ENCODE measurements at regions of chr5 and their contacts with region 1.

Region 1: GRCh38 chr5:75551471-75551870 is 39.8 kb downstream of the POLK start:
- DNase-seq: no peak
- CTCF ChIP-seq: no peak

Region 2: GRCh38 chr5:75566710-75567309 is 15.3 kb after region 1 on chr5:
- CTCF ChIA-PET with region 1: interaction called, 10 read pairs
- POLR2A ChIA-PET with region 1: no interaction called
- DNase-seq: peak; percentile 61
- CTCF ChIP-seq: no peak